Pancreas (tissue), 10 donors: ENCODE measurements at regions of chr12 and their contacts with region 1.

Region 1: DNA sequence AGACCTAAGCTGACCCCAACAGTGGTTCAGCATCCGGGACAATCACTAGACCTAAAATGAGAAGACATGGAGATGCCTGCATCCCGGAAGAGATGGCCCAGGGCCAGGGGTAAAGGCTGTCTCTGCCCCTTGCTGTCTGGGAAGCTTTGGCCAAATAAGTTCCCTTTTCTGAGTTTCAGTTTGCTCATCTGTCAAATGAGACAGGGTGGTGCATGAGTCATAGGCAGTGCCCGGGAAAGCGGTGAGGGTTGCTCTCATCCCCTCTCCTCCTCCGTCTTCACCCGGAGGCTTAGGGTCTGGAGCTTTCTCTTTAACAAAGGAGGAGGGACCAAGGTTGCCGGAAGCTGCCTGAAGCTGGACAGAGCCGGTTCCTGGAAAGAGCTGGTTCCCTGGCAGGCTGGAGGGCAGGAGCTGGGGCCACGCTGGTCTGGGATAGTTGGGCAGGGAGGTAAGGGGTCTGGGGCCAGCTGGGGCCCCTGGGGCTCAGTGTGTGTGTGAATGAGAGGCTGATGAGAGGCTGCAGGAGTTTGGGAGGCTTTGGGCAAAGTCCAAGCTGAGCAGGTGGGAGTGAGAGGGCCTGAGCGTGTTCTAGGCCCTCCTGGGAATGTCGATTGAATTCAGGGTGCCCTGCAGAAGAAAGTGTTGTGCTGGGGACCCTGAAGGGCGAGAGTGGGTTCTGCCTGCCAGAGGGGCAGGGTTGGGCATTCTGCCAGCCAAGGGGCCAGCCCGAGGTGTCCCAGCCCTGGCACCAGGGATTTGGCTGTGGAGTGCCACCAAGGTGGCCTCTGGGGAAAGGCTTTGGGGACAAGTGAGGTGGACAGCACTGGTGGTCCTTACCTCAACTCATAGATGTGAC is at the start of gene SDSL:
- DNase-seq: peak; percentile 63 to 89 (median 75)
- ATAC-seq: peak; percentile 91 to 96 (median 95)
- H3K4me3 ChIP-seq: peak within 1 kb of the TSS; percentile 48 to 57 (median 50)
- H3K27ac ChIP-seq: peak within 1 kb of the TSS in 3 of 4 donors; percentile 51 to 86 (median 78)
- H3K4me1 ChIP-seq: peaks cover 0 to 18% (median 7%) of the 10 kb centered on the region in 3 donors
- H3K27me3 ChIP-seq: no peaks in the 10 kb centered on the region
- CTCF ChIP-seq: no peak
- total RNA-seq, gene SDSL: 5.4 to 13.2 (median 8.3) TPM

Region 2: GRCh38 chr12:113116875-113117274 is 305.4 kb before region 1 on chr12:
- intact Hi-C with region 1: no loop called
- DNase-seq: no peak
- ATAC-seq: no peak
- H3K4me3 ChIP-seq: no peak overlapping the region
- H3K27ac ChIP-seq: no peak overlapping the region
- H3K4me1 ChIP-seq: no peaks in the 10 kb centered on the region
- H3K27me3 ChIP-seq: no peaks in the 10 kb centered on the region
- CTCF ChIP-seq: no peak

Region 3: DNA sequence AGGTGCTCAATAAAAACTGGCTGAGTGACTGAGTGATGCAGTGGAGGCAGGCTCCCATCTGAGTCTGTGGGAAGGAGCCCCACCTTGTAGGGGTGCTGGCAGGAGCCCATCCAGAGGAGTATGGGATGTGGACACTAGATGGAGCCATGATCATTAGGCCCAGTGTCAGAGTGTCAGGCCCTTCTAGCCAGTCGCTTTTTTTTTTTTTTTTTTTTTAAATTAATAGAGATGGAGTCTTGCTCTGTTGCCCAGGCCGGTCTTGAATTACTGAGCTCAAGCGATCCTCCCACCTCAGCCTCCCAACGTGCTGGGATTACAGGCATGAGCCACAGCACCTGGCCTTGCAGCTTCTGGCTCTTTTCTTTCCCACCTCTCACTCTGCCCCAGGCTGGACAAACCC is 225.3 kb before region 1 on chr12:
- intact Hi-C with region 1: loop called in 1 of 3 experiments (anchors 10 kb)
- DNase-seq: peak in 4 of 6 donors; percentile 70 to 81 (median 72)
- ATAC-seq: peak; percentile 55 to 82 (median 76)
- H3K4me3 ChIP-seq: no peak overlapping the region
- H3K27ac ChIP-seq: no peak overlapping the region
- H3K4me1 ChIP-seq: peaks cover 15 to 22% (median 17%) of the 10 kb centered on the region in 3 donors
- H3K27me3 ChIP-seq: no peaks in the 10 kb centered on the region
- CTCF ChIP-seq: peak; percentile 15 to 58 (median 54)

Region 4: GRCh38 chr12:113310489-113310888 is 111.8 kb before region 1 on chr12:
- intact Hi-C with region 1: loop called in 2 of 3 experiments (anchors 5 to 10 kb)
- DNase-seq: no peak
- ATAC-seq: no peak
- H3K4me3 ChIP-seq: no peak overlapping the region
- H3K27ac ChIP-seq: no peak overlapping the region
- H3K4me1 ChIP-seq: no peaks in the 10 kb centered on the region
- H3K27me3 ChIP-seq: no peaks in the 10 kb centered on the region
- CTCF ChIP-seq: no peak